Activated naive CD4-positive, alpha-beta T cell treated with anti-CD3 and anti-CD28 coated beads for 36 hours (primary cell): ENCODE measurements at regions of chr6 and their contacts with region 1.

Region 1: DNA sequence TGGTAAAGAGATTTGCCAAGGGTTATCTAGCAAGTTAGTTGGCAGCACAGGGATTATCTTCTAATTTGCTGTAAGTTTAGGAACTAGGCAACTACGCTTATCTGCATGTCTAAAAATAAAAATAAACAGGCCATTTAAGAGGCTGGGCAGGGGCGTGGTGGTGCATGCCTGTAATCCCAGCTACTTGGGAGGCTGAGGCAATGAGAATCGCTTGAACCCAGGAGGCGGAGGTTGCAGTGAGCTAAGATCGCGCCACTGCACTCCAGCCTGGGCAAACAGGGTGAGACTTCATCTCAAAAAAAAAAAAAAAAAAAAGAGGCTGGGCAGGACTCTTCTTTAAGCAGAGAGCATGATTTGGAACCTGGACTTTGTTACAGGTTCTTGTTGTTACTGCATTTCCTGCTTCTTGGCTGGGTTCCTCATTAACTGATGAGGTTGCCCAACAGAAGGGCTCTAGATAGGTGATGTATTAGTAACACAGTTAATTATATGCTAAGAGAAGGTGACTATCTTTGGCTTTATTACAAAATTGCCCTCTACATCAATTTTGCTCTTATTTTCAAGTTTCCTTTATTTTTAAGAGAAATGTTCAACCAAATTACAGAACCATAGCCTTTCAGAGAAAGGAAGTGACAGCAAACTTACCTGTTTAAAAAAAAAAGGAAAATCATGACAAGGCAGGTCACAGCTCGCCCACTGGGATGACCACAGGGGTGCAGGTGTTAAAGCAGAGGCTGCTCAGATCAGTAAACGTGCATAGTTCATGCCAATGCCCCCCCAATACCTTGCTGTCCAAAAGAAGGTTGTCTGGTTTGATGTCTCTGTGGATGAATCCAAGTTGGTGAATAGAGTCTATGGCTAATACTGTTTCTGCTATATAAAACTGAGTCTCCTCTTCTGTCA is 32.5 kb downstream of the STK38 start:
- DNase-seq: no peak
- H3K4me3 Mint-ChIP-seq: no peak overlapping the region
- H3K27ac Mint-ChIP-seq: peak overlapping the region; percentile 16
- H3K4me1 Mint-ChIP-seq: peaks cover 42% of the 10 kb centered on the region
- H3K27me3 Mint-ChIP-seq: no peaks in the 10 kb centered on the region

Region 2: DNA sequence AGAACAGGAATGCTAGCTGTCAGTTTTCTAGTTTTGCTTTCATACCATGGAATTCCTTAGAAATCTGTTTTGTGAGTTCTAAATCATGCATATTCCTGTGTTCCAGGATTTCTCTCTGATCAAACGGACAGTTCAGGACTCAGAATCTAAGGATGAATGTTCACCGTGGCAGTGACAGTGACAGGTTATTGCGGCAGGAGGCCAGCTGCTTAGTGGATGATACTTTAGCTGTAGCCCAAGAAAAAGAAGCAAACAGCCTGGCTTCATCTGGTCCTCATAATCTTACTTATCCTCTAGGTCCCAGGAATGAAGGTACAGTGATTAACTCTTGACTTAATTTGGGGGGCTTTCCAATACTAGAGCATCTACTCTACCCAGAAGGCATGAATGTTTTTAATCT is 44.9 kb before region 1 on chr6:
- CTCF ChIA-PET with region 1: no interaction called
- intact Hi-C with region 1: loop called (anchors 5 kb)
- DNase-seq: no peak
- H3K4me3 Mint-ChIP-seq: no peak overlapping the region
- H3K27ac Mint-ChIP-seq: no peak overlapping the region
- H3K4me1 Mint-ChIP-seq: peaks cover 6% of the 10 kb centered on the region
- H3K27me3 Mint-ChIP-seq: no peaks in the 10 kb centered on the region